Common myeloid progenitor, CD34-positive (primary cell): ENCODE measurements at regions of chr12 and their contacts with region 1.

Region 1: DNA sequence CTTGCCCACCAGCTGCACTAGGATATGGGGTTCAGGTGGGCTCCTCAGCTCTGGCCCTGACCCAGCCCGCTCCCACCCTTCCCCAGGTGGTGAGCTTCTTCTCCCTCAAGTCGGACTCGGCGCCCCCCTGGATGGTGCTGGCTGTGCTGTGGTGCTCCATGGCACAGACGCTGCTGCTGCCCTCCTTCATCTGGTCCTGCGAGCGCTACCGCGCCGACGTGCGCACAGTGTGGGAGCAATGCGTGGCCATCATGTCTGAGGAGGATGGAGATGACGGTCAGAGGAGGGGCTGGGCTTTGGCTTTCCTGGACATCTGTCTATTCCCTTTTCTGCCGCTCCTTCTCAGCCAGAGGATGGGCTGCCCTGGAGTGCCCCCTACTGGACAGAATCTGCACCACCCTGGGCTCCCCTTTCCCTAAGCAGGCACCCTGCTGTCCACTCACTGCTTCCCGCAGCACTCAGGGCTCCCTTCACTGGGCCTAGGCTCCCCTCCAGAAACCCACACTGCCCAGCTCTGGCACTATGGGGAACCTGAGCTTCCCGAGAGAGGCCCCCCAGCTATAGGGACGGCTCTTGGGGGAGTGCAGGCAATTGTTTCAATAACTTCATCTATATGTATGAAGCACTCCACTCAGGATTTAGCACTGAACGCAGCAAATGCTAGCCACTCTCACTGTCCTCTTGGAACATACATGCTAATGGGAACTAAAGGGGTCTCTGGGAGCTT is 2.6 kb upstream of the P3H3 start:
- DNase-seq: peak; percentile 66 to 80 (median 73)
- H3K4me3 ChIP-seq: peak overlapping the region in 1 of 7 experiments; percentile 32
- H3K27ac ChIP-seq: no peak overlapping the region
- H3K4me1 ChIP-seq: peaks cover 0 to 44% (median 39%) of the 10 kb centered on the region in 4 experiments
- H3K27me3 ChIP-seq: peaks cover 0 to 7% (median 0%) of the 10 kb centered on the region in 5 experiments

Region 2: DNA sequence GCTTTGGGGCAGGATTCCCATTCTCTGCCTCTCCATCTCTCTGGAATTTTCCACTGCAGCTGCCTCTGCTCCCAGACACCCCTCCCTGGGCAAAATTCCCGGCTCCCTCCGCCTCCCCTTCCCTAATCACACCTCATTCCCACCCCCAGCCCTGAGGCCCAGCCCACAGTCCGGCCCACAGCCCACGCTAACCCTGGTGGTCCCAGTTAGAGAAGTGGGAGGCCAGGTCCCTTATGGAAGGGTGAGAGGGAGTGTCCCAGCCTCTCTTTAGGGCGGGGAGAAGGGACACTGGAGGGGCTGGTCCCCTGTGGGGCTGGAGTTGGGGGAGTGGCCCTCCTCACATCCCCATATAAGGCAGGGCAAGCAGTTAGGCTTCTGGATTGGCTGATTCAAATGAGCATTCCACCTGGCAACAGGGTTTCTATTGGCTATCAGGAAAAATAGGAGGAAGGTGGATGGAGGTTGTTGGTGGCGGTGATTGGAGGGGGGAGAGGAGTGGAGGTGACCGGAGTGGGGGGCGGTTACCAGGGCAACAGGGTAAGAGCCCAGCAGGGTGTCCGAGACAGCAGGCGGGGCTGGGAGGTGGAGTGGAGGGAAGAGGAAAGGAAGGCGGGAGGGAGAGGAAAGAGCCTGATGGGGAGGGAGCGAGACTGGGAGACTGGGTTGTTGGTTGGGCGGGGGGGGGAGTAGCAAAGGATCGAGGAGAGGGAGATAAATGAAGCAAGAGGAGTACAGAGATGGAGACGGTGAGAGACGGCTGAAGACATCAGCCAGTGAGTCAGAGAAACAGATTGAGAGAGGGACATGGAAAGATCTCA is 61.3 kb before region 1 on chr12:
- CTCF ChIA-PET with region 1: interaction called, 17 read pairs
- POLR2A ChIA-PET with region 1: interaction called, 3 read pairs
- DNase-seq: peak; percentile 92 to 96 (median 95)
- H3K4me3 ChIP-seq: peak overlapping the region in 5 of 7 experiments; percentile 10 to 71 (median 48)
- H3K27ac ChIP-seq: peak overlapping the region in 1 of 2 experiments; percentile 64
- H3K4me1 ChIP-seq: peaks cover 8 to 44% (median 31%) of the 10 kb centered on the region in 4 experiments
- H3K27me3 ChIP-seq: peaks cover 0 to 16% (median 0%) of the 10 kb centered on the region in 5 experiments

Region 3: DNA sequence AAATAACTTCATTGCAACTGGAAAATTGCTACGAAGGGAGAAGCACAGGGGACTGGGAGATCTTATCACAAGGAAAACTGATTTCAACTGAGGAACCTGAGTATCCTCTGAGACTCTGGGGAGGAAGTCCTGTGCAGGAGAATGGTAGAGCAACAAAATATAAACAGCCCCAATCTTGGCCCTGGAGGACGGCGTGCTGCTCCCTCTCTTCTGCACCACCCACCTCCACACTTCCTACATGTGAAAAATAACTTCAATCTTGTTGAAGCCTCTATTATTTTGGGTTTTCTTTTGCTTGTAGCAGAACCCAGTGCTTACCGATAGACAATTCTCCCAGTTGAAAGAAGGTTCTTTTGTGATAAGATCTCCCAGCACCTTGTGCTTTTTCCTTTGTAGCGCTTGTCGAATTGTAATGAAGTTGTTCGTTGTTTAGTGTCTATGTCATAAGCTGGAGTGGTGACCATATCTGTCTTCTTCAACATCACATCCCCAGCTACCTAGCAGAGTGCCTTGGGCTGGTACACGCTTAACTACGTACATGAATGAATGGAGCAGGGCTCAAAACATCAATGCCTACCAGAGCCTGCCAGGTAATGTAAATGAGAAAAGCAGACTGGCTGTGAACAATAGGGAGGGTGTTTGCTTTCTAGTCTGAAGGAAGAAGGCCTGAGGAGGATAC is 39.0 kb before region 1 on chr12:
- CTCF ChIA-PET with region 1: interaction called, 52 read pairs
- POLR2A ChIA-PET with region 1: interaction called, 10 read pairs
- DNase-seq: no peak
- H3K4me3 ChIP-seq: no peak overlapping the region
- H3K27ac ChIP-seq: no peak overlapping the region
- H3K4me1 ChIP-seq: peaks cover 2 to 39% (median 31%) of the 10 kb centered on the region in 4 experiments
- H3K27me3 ChIP-seq: no peaks in the 10 kb centered on the region

Region 4: GRCh38 chr12:6807170-6807569 is 18.4 kb before region 1 on chr12:
- CTCF ChIA-PET with region 1: interaction called, 97 read pairs
- POLR2A ChIA-PET with region 1: no interaction called
- DNase-seq: no peak
- H3K4me3 ChIP-seq: no peak overlapping the region
- H3K27ac ChIP-seq: no peak overlapping the region
- H3K4me1 ChIP-seq: no peaks in the 10 kb centered on the region
- H3K27me3 ChIP-seq: no peaks in the 10 kb centered on the region